Heart left ventricle (tissue), 16 donors: ENCODE measurements at regions of chr17 and their contacts with region 1.

Region 1: DNA sequence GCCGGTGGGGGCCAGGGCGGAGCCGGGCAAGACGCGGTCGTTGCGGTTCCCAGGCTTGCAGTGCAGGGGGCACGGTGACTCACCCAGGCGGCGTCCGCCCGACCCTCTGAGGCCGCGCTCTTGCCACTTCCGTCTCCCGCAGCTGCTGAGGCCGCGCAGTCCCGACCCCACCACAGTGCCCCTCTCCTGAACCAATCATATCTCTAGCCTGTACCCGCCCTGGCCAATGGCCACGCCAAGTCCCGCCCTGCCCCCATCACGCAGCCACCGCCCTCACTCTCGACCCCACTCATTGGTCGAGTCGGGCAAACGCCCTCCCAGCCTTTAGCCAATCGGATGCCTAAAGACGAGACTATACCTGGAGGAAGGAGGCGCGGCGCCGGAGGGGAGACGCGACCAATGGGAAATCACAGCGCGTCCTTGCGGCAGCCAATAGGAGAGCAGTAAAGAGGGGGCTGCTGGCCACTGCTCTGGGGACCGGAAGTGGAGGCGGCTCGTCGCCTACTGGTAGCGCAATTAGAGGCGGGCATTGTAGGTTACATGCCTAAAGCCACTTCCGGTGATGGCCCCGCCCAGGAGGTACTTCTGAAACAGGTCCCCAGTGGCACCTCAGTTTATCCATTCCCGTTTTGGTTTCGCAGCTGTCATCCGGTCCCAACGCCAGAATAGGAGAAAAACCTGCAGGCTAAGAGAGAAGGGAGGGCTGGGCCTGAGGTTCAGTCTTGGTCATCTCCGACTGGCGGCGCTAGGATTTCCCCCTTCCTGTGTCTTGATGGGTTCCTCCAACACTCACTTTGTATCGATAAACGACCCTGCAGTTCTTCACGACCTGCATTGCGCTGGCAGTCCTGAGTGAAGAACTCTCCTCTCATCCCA is 3.5 kb upstream of the MTMR4 start:
- DNase-seq: peak; percentile 100
- ATAC-seq: peak; percentile 89 to 94 (median 93)
- H3K4me3 ChIP-seq: peak overlapping the region; percentile 66 to 97 (median 76)
- H3K27ac ChIP-seq: peak overlapping the region; percentile 92 to 99 (median 97)
- H3K4me1 ChIP-seq: peaks cover 5 to 66% (median 42%) of the 10 kb centered on the region in 12 donors
- H3K27me3 ChIP-seq: no peaks in the 10 kb centered on the region
- CTCF ChIP-seq: no peak
- POLR2A ChIP-seq: peak in 1 of 2 donors; percentile 52

Region 2: DNA sequence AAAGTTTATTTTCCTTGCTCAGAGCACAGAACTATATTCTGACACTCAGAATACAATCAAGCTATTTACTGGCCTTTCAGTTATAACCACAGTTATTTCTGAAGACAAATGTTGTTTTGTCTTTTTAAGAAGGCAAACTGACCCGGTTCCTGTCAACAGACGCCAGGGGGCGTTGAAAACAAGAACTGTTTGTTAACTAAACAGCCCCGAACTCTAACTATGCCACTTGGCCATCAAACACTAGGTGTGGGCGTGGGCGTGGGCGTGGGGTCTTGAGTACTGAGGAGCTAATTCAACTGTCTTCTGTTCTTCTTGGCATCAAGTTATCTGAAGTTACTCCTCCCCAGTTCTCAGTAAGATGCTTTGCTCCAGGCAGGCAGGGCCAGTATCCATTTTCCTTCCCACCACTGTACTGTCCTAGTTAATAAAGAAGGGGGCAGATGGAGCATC is 59.7 kb after region 1 on chr17:
- intact Hi-C with region 1: loop called in 4 of 10 experiments (anchors 2 to 10 kb)
- DNase-seq: peak in 4 of 5 donors; percentile 30 to 56 (median 40)
- ATAC-seq: peak in 2 of 4 donors; percentile 30 to 31
- H3K4me3 ChIP-seq: no peak overlapping the region
- H3K27ac ChIP-seq: no peak overlapping the region
- H3K4me1 ChIP-seq: peaks cover 0 to 12% (median 2%) of the 10 kb centered on the region in 12 donors
- H3K27me3 ChIP-seq: no peaks in the 10 kb centered on the region
- CTCF ChIP-seq: peak; percentile 43 to 72 (median 59)
- POLR2A ChIP-seq: no peak

Region 3: DNA sequence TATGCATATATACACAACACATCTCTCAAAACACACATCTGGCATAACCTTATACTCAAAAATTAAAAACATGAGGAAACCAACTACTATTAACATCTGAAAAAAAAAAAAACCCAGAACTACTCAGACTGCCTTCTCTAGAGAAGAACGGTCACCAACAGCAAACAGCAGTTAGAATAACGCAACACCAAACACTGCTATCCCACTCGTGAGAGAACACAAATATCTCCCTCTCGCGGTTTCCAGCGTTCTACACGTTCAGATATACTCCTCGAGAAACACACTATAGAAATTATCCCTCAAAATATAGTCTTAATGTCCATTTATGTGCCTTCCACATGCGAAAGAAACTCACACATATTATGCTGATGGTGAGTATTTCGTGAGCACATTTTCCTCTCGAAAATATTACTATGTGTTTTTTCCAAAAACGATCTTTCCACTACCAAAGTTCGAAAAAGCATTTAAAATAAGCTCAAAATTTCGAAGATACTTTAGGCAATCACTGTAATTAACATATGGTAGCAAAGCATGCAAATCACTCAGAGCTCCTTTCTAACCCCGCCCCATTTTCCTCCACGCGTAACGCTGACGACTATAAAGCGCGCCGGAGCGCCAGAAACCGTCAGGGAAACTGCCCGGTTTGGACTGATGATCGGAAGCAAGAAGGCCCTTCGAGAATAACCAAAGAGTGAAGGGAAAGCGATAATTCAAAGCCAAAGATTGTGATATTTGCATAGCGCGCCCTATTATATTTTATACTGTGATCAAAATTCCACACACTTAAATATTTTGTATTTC is 113.8 kb after region 1 on chr17:
- intact Hi-C with region 1: loop called in 8 of 10 experiments (anchors 1 to 10 kb)
- DNase-seq: peak; percentile 94 to 96 (median 95)
- ATAC-seq: peak; percentile 97 to 98 (median 97)
- H3K4me3 ChIP-seq: peak overlapping the region; percentile 2 to 61 (median 48)
- H3K27ac ChIP-seq: peak overlapping the region; percentile 49 to 93 (median 78)
- H3K4me1 ChIP-seq: peaks cover 0 to 24% (median 4%) of the 10 kb centered on the region in 12 donors
- H3K27me3 ChIP-seq: no peaks in the 10 kb centered on the region
- CTCF ChIP-seq: peak in 7 of 12 donors; percentile 6 to 43 (median 22)
- POLR2A ChIP-seq: peak in 1 of 2 donors; percentile 84

Region 4: DNA sequence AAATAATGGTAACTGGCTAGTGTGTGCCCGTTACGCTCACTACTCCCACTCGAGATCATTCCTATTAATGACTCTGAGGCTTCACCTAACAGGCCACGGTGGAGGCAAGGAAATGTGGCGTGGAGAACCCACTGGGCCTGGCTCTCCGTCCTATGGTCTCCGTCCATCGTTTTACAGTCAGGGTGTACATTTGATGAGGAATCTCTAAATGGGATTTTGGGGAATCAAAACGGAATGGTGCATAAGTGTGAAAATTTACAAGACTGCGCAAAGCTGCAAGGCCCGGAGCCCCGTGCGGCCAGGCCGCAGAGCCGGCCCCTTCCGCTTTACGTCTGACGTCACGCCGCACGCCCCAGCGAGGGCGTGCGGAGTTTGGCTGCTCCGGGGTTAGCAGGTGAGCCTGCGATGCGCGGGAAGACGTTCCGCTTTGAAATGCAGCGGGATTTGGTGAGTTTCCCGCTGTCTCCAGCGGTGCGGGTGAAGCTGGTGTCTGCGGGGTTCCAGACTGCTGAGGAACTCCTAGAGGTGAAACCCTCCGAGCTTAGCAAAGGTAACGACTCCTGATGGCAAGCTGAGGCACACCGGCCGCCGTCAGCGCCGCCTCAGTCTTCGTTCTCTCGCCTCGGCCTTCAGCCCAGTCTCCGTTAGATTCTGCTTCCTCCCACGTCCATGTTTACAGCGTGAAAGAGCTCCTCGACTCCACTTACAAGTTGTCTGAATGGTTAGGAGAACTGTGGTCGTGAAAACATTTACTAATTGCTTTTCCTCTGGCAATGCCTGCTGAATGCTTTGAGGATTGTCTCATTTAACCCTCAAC is 174.5 kb after region 1 on chr17 and contains the start of gene RAD51C:
- intact Hi-C with region 1: loop called in 6 of 10 experiments (anchors 2 to 10 kb)
- DNase-seq: peak; percentile 86 to 93 (median 87)
- ATAC-seq: peak; percentile 89 to 100 (median 100)
- H3K4me3 ChIP-seq: peak within 1 kb of the TSS; percentile 45 to 87 (median 70)
- H3K27ac ChIP-seq: peak within 1 kb of the TSS in 11 of 12 donors; percentile 53 to 91 (median 79)
- H3K4me1 ChIP-seq: peaks cover 0 to 19% (median 11%) of the 10 kb centered on the region in 12 donors
- H3K27me3 ChIP-seq: no peaks in the 10 kb centered on the region
- CTCF ChIP-seq: no peak
- POLR2A ChIP-seq: peak in 1 of 2 donors; percentile 57
- total RNA-seq, gene RAD51C: 17.1 to 48.9 (median 39.6) TPM

Region 5: DNA sequence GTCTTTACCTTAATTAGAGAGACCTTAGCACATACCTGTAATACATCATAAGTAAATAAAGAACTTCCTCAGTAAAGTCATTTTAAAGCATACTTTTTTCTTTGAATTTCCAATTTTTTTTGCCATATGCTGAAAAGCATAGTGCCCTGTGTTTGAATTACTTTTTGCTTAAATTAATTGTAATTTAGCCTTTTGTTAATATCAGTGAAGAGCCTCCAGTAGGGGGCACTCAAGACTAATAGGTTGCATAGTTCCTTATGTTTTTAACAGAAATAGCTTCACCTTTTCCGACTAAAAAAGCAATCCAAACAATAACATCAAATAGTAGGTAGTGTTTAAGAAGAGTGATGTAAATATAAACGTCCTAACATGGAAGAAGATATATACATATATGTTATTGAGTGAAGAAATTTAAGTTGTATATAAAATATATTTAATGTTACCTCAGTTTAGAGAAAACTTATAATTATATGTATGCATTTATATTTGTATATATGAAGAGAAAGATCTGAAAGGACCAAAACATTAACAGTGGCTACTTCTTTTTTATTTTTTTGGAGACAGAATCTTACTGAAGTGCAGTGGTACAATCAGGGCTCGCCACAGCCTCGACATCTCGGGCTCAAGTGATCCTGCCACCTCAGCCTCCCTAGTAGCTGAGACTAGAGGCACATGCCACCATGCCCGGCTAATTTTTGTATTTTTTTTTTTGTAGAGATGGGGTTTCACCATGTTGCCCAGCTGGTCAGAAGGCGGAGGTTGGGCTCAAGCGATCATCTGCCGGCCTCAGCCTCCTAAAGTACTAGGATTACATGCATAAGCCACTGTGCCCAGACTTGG is 193.2 kb after region 1 on chr17:
- intact Hi-C with region 1: loop called in 2 of 10 experiments (anchors 5 to 10 kb)
- DNase-seq: peak in 1 of 5 donors; percentile 12
- ATAC-seq: no peak
- H3K4me3 ChIP-seq: no peak overlapping the region
- H3K27ac ChIP-seq: no peak overlapping the region
- H3K4me1 ChIP-seq: no peaks in the 10 kb centered on the region
- H3K27me3 ChIP-seq: no peaks in the 10 kb centered on the region
- CTCF ChIP-seq: peak; percentile 50 to 83 (median 72)
- POLR2A ChIP-seq: no peak

Region 6: DNA sequence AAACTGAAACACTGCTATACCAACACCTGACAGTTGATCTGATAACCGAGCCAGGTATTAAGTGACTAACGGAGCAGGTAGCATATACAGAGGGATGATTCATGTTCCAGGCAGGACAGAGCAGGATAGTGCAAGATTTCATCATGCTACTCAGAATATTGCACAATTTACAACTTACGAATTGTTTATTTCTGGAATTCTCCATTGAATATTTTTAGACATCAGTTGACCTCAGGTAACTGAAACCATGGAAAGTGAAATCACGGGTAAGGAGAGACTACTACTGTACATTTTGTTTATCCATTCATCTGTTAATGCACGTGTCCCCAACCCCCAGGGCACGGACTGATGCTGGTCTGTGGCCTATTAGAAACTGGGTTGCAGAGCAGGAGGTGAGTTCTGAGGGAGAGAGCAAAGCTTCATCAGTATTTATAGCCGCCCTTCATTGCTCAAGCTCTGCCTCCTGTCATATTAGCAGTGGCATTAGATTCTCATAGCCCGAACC is 223.2 kb after region 1 on chr17:
- intact Hi-C with region 1: no loop called
- DNase-seq: no peak
- ATAC-seq: no peak
- H3K4me3 ChIP-seq: no peak overlapping the region
- H3K27ac ChIP-seq: no peak overlapping the region
- H3K4me1 ChIP-seq: no peaks in the 10 kb centered on the region
- H3K27me3 ChIP-seq: no peaks in the 10 kb centered on the region
- CTCF ChIP-seq: no peak
- POLR2A ChIP-seq: no peak

Region 7: DNA sequence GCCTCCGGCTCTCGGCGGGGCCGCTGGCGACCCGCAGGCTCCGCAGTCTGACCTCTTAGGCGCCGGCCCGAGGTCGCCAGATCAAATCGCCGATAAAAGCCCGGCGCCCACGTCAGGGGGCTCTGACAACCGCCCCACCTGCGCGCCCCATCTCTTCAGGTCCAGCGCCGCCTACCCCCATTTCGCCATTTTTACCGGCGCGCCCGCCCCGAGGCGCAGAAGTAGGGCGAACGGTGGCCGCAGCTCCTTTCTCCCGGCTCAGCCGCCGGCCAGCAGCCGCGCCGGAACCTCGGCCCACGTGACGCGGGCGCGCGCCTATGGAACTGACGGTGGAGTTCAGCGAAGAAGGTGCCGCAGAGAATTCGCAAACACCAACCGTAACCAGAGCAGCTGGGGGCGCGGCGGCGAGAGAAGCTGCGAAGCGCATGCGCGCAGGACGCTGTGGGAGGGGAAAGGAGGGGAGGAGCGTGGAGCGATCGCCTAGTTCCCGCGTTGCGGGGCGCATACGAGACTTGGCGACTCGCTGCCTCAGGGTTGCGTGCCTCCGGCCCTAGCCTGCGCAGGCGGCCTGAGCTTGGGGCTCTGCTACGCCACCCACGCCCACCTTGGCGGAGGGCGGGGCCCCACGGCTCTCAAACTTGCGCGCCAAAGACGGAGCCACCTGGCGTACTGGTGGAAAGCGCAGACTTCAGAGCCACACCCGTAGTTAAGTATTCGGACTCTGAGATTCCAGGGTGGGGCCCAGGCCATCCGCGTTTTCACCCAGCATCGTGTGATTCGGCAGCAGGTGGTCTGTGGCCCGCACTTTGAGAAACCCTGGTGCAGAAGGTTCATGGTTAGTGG is 588.7 kb after region 1 on chr17 and contains the start of gene TRIM37:
- intact Hi-C with region 1: loop called in 1 of 10 experiments (anchors 10 kb)
- DNase-seq: peak; percentile 96 to 100 (median 98)
- ATAC-seq: peak; percentile 98 to 100 (median 99)
- H3K4me3 ChIP-seq: peak within 1 kb of the TSS; percentile 78 to 100 (median 89)
- H3K27ac ChIP-seq: peak within 1 kb of the TSS; percentile 64 to 96 (median 92)
- H3K4me1 ChIP-seq: peaks cover 0 to 34% (median 19%) of the 10 kb centered on the region in 12 donors
- H3K27me3 ChIP-seq: no peaks in the 10 kb centered on the region
- CTCF ChIP-seq: peak in 2 of 12 donors; percentile 17 to 42
- POLR2A ChIP-seq: peak in 1 of 2 donors; percentile 81
- total RNA-seq, gene TRIM37: 17.2 to 26.2 (median 19.2) TPM